Heart right ventricle (tissue), 16 donors: ENCODE measurements at regions of chr18 and their contacts with region 1.

Region 1: GRCh38 chr18:28115149-28115550 is 61.8 kb downstream of the CDH2 start:
- DNase-seq: no peak
- ATAC-seq: peak in 1 of 8 donors; percentile 18
- H3K4me3 ChIP-seq: no peak overlapping the region
- H3K27ac ChIP-seq: peak overlapping the region in 9 of 10 donors; percentile 35 to 88 (median 85)
- H3K4me1 ChIP-seq: peaks cover 0 to 79% (median 37%) of the 10 kb centered on the region in 9 donors
- H3K27me3 ChIP-seq: no peaks in the 10 kb centered on the region
- CTCF ChIP-seq: no peak

Region 2: GRCh38 chr18:28147674-28148171 is 32.6 kb after region 1 on chr18:
- intact Hi-C with region 1: loop called in 1 of 10 experiments (anchors 5 kb)
- DNase-seq: no peak
- ATAC-seq: no peak
- H3K4me3 ChIP-seq: no peak overlapping the region
- H3K27ac ChIP-seq: peak overlapping the region in 4 of 10 donors; percentile 0 to 39 (median 10)
- H3K4me1 ChIP-seq: peaks cover 0 to 75% (median 31%) of the 10 kb centered on the region in 9 donors
- H3K27me3 ChIP-seq: no peaks in the 10 kb centered on the region
- CTCF ChIP-seq: no peak